MCF 10A (cell line): ENCODE measurements at regions of chr19 and their contacts with region 1.

Region 1: GRCh38 chr19:7340959-7341837 is 7.5 kb upstream of the ARHGEF18 start:
- DNase-seq: peak; percentile 78
- H3K4me3 Mint-ChIP-seq: no peak overlapping the region
- H3K27ac Mint-ChIP-seq: no peak overlapping the region
- H3K4me1 Mint-ChIP-seq: no peaks in the 10 kb centered on the region
- H3K27me3 Mint-ChIP-seq: peaks cover 24% of the 10 kb centered on the region
- CTCF ChIP-seq: peak; percentile 83

Region 2: DNA sequence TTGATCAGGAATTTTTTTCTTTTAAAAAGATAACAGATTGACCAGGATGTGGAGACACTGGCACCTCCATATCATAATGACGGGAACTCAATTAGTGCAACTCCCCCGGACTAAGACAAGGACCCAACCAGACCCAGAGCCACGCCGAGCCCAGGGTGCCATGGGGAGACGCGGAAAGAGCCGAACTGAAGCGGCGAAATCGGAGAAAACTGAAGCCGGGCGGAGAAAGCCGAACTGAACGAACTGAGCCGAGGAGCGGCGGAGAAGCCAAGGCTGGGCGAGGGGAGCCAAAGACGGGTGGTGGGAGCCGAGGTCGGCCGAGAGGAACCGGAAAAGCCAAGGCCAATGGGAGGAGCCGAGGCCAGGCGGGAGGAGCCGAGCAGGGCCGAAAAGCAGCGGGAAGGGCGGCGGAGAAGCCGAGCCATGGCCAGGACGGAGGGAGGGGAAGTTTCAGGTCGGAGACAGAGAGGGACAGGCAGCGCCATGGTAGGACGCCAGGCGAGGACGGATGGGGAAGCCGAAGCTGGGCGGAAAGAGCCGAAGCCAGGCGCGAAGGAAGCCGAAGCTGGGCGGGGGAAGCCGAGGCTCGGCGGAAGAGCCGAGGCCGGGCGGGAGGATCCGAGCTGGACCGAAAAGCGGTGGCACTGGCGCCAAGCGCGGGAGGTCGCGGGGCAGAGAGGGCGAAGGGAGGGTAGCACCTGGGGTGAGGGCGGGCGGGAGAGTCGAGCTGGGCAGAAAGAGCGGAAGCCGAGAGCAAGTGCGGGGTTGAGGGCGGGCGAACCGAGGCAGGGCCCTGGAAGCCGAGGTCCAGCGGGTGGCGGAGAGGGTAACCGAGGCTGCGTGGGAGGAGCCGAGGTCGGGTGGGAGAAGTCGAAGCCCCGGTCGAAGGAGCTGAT is 242.2 kb before region 1 on chr19:
- CTCF ChIA-PET with region 1: interaction called, 29 read pairs
- POLR2A ChIA-PET with region 1: interaction called, 5 read pairs
- intact Hi-C with region 1: loop called (anchors 1 kb)
- DNase-seq: peak; percentile 92
- H3K4me3 Mint-ChIP-seq: peak overlapping the region; percentile 99
- H3K27ac Mint-ChIP-seq: peak overlapping the region; percentile 96
- H3K4me1 Mint-ChIP-seq: peaks cover 7% of the 10 kb centered on the region
- H3K27me3 Mint-ChIP-seq: no peaks in the 10 kb centered on the region
- CTCF ChIP-seq: no peak

Region 3: GRCh38 chr19:7137120-7137519 is 204.1 kb before region 1 on chr19:
- CTCF ChIA-PET with region 1: interaction called, 11 read pairs
- POLR2A ChIA-PET with region 1: no interaction called
- intact Hi-C with region 1: no loop called
- DNase-seq: no peak
- H3K4me3 Mint-ChIP-seq: no peak overlapping the region
- H3K27ac Mint-ChIP-seq: no peak overlapping the region
- H3K4me1 Mint-ChIP-seq: no peaks in the 10 kb centered on the region
- H3K27me3 Mint-ChIP-seq: no peaks in the 10 kb centered on the region
- CTCF ChIP-seq: no peak

Region 4: DNA sequence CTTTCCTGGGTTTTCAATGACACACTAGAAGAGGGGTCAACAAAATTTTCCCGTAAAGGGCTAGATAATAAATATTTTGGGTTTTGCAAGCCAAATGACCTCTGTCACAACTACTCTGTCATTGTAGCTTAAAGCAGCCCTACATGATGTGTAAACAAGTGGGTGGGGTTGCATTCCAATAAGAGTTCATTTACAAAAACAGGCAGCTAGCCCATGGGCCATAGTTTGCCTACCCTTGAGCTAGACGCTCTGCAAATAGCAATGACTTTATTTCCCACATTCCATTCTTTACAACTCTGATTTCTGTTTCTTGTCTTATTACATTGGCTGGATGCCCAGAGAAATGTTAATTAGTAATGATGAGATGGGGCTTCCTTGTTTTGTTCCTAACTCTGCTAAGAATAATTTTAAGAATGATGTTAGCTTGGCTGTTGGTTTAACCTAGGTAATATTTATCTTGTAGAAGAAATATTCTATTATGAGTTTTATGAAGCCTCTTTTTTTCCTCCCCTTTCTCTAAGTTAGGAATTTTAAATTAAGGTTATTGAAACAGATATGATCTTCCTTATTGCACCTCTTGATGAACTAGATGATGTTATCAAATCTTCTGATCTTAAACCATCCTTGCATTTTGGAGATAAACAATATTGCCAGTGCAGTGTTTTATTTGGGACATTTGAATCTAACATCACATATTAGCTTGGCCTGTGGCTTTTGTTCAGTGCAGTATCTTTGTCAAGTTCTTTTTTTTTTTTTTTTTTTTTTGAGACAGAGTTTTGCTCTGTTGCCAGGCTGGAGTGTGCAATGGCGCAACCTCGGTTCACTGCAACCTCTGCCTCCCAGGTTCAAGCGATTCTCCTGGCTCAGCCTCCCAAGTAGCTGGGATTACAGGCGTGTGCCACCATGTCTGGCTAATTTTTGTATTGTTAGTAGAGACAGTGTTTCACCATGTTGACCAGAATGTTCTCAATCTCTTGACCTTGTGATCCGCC is 195.4 kb before region 1 on chr19:
- CTCF ChIA-PET with region 1: interaction called, 29 read pairs
- POLR2A ChIA-PET with region 1: interaction called, 3 read pairs
- intact Hi-C with region 1: loop called (anchors 1 kb)
- DNase-seq: no peak
- H3K4me3 Mint-ChIP-seq: no peak overlapping the region
- H3K27ac Mint-ChIP-seq: no peak overlapping the region
- H3K4me1 Mint-ChIP-seq: no peaks in the 10 kb centered on the region
- H3K27me3 Mint-ChIP-seq: no peaks in the 10 kb centered on the region
- CTCF ChIP-seq: no peak

Region 5: GRCh38 chr19:7257148-7258034 is 83.8 kb before region 1 on chr19:
- CTCF ChIA-PET with region 1: no interaction called
- POLR2A ChIA-PET with region 1: no interaction called
- intact Hi-C with region 1: no loop called
- DNase-seq: peak; percentile 49
- H3K4me3 Mint-ChIP-seq: peak overlapping the region; percentile 44
- H3K27ac Mint-ChIP-seq: no peak overlapping the region
- H3K4me1 Mint-ChIP-seq: peaks cover 9% of the 10 kb centered on the region
- H3K27me3 Mint-ChIP-seq: no peaks in the 10 kb centered on the region
- CTCF ChIP-seq: no peak

Region 6: GRCh38 chr19:7382694-7383093 is 41.5 kb after region 1 on chr19:
- CTCF ChIA-PET with region 1: no interaction called
- POLR2A ChIA-PET with region 1: no interaction called
- intact Hi-C with region 1: no loop called
- DNase-seq: no peak
- H3K4me3 Mint-ChIP-seq: no peak overlapping the region
- H3K27ac Mint-ChIP-seq: no peak overlapping the region
- H3K4me1 Mint-ChIP-seq: peaks cover 12% of the 10 kb centered on the region
- H3K27me3 Mint-ChIP-seq: no peaks in the 10 kb centered on the region
- CTCF ChIP-seq: no peak